ENCODE measurements at regions of chr11 and their contacts with region 1.

Region 1: GRCh38 chr11:61947486-61948210 is 2.5 kb upstream of the BEST1 start:
- DNase-seq: peak; percentile 83

Region 2: DNA sequence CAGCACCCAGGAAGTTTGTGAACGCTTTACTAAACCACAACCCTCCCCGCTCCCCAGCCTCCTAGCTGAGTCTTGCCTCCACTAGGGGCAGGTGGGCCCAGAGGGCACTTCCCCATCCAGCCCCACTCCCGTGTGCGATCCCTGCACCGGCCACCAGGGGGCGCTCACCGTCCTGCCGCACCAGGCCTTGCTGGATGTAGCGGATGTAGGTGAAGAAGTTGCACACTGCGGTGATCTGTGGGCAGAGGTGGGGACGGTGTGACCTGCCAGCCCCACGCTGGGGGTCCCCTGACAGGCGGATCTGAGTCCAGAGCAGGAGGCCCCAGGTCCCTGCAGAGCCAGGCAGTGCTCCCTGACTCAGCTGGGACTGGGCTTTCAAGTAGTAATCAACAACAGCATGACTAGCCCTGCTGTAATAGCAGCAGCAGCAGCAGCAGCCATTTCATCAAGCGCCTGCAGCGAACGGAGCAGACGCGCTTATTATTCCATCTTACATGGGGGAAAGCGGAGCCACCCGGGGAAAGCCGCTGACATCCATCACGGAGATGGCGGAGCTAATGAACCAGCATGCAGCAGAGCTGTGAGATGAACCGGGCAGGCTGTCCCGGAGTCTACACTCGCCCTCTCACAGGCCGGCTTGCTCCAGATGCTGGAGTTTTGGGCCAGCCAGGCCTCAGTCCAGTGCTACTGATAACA is 48.4 kb before region 1 on chr11:
- in situ Hi-C with region 1: loop called (anchors 10 kb)
- DNase-seq: peak; percentile 95

Region 3: GRCh38 chr11:62048065-62048464 is 100.4 kb after region 1 on chr11:
- in situ Hi-C with region 1: loop called (anchors 10 kb)
- DNase-seq: no peak

Region 4: GRCh38 chr11:62353844-62354243 is 406.2 kb after region 1 on chr11:
- in situ Hi-C with region 1: no loop called
- DNase-seq: no peak

Region 5: DNA sequence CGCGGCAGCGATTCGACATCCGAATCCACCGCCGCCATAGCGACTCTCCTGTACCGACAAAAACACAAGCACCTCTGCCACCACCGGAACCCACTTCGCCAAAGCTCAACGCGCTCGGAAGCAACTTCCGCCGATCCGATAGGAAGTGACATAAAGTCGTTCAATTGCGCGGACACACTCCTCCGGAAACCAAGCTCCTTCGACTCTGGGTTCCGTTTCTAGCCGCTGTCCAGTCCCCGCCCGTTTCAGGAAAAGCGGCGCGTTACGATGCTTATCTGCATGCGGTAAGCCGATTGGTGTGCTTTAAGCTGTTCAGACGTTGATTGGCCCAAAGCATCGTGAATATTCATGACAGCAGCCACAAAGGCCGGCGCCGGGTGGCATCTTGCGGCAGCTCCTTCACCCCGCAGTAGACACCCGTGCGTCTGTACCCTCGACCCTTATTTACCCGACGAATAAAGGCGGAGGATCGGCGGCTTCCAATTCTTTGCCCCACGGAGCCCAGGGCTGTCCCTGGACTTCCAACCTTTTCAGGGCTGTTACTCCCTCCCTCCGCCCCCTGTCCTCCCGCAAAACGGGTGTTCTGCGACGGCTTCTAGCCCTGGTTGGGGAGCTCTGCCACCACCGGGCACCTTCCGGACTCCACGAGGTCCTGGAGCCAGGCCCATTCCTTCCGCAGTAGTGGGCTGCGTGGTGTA is 643.9 kb after region 1 on chr11 and contains the start of gene TUT1:
- in situ Hi-C with region 1: no loop called
- DNase-seq: peak; percentile 100

Measured in KBM-7 (cell line).